Ovary (tissue), 10 donors: ENCODE measurements at regions of chr11 and their contacts with region 1.

Region 1: DNA sequence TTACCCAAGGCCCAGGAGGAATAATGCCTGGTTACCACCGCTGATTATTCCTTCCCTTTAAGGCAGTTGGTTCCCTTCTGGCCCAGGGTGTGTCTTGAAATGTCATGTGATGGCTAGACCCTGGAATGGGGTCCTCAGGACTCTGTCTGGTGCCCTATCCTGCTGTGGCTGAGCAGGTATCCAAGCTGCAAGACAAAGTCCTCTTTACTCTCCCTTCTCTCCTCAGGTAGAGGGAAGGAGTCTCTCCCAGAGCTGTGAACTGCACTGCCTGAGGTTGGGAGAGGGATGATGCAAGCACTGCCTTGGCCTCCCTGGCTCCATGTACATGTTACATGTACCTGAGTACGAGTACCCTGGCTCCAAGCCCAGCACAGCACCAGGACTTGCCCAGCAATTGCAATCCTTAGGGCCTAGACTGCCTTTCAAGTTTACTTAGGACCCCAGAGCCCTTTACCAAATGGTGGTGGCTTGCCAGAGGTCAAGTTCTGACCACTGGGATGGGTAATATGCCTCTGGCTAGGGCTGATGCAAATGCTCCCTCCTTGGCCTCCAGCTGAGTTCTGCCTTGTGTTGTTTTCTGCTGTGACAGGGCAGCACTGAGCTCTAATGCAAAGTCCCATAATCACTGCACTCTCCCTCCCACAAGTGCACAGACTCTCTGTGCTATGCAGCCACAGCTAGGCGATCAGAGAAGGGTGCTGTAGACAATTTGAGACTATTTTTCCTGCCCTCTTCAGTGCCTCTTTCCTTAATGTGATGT is 20.7 kb upstream of the AQP11 start:
- DNase-seq: peak; percentile 28 to 60 (median 54)
- H3K4me3 ChIP-seq: no peak overlapping the region
- H3K27ac ChIP-seq: no peak overlapping the region
- H3K4me1 ChIP-seq: peaks cover 18% of the 10 kb centered on the region
- H3K27me3 ChIP-seq: no peaks in the 10 kb centered on the region
- CTCF ChIP-seq: no peak
- EP300 ChIP-seq: no peak
- POLR2A ChIP-seq: no peak

Region 2: DNA sequence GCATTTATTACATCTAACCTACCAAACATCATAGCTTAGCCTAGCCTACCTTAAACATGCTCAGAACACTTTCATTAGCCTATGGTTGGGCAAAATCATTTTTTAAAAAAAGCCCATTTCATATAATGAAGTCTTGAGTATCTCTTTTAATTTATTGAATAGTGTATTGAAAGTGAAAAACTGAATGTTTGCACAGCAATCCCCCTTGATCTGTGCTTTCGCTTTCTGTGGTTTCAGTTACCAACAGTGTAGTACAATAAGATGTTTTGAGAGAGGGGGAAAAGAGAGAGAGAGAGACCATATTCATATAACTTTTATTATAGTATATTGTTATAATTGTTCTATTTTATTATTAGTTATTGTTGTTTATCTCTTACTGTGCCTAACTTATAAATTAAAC is 1891.8 kb before region 1 on chr11:
- intact Hi-C with region 1: loop called in 1 of 4 experiments (anchors 5 kb)
- DNase-seq: no peak
- H3K4me3 ChIP-seq: no peak overlapping the region
- H3K27ac ChIP-seq: no peak overlapping the region
- H3K4me1 ChIP-seq: no peaks in the 10 kb centered on the region
- H3K27me3 ChIP-seq: no peaks in the 10 kb centered on the region
- CTCF ChIP-seq: no peak
- EP300 ChIP-seq: no peak
- POLR2A ChIP-seq: no peak

Region 3: GRCh38 chr11:77361184-77361583 is 207.9 kb before region 1 on chr11:
- intact Hi-C with region 1: no loop called
- DNase-seq: no peak
- H3K4me3 ChIP-seq: no peak overlapping the region
- H3K27ac ChIP-seq: no peak overlapping the region
- H3K4me1 ChIP-seq: no peaks in the 10 kb centered on the region
- H3K27me3 ChIP-seq: no peaks in the 10 kb centered on the region
- CTCF ChIP-seq: no peak
- EP300 ChIP-seq: no peak
- POLR2A ChIP-seq: no peak

Region 4: GRCh38 chr11:77647654-77648305 is 78.7 kb after region 1 on chr11:
- intact Hi-C with region 1: no loop called
- DNase-seq: no peak
- H3K4me3 ChIP-seq: no peak overlapping the region
- H3K27ac ChIP-seq: no peak overlapping the region
- H3K4me1 ChIP-seq: no peaks in the 10 kb centered on the region
- H3K27me3 ChIP-seq: no peaks in the 10 kb centered on the region
- CTCF ChIP-seq: no peak
- EP300 ChIP-seq: no peak
- POLR2A ChIP-seq: no peak